Transverse colon (tissue), 4 donors: ENCODE measurements at regions of chr5 and their contacts with region 1.

Region 1: DNA sequence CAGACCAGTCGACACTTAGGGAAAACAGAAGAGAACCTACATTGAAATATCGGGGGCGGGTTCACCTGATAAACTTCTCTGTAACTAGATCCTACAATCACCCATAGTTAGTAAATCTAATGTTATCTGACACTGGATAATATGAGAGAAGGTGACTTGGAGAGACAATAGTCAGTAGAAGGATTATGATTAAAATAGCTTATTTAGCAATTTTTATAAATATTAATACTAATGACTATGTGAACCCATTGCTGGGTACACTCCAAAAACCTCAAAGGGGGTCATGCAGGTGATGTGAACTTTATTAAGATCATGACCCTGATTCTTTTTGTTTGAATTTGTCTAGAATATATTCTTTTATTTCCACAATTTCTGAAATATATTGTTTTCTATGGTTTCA is 164.1 kb upstream of the CCNH start:
- DNase-seq: no peak
- H3K4me3 ChIP-seq: no peak overlapping the region
- H3K27ac ChIP-seq: no peak overlapping the region
- H3K4me1 ChIP-seq: no peaks in the 10 kb centered on the region
- H3K27me3 ChIP-seq: no peaks in the 10 kb centered on the region
- CTCF ChIP-seq: no peak
- EP300 ChIP-seq: no peak
- POLR2A ChIP-seq: no peak

Region 2: GRCh38 chr5:87421307-87421706 is 155.6 kb before region 1 on chr5:
- in situ Hi-C with region 1: no loop called
- intact Hi-C with region 1: no loop called
- DNase-seq: no peak
- H3K4me3 ChIP-seq: no peak overlapping the region
- H3K27ac ChIP-seq: no peak overlapping the region
- H3K4me1 ChIP-seq: no peaks in the 10 kb centered on the region
- H3K27me3 ChIP-seq: no peaks in the 10 kb centered on the region
- CTCF ChIP-seq: no peak
- EP300 ChIP-seq: no peak
- POLR2A ChIP-seq: no peak

Region 3: DNA sequence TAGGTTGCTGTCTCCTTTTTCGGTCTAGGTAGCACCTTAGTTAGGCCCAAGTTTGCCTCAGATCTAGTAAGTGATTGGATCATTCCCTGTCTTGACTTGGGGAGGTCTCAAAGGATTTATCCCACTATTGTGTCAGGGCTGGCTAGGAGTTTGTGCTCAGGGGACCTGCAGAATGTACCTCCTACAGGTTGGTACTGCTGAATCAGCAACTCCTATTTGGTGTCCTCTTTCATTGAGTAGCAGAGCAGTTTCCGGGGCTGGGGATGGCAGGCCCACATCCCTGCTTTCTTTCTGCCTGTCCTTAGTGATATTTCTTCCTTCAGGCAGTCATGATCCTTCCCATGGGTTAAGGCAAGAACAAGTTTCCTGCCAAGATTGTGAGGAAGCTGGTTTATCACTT is 28.8 kb after region 1 on chr5:
- in situ Hi-C with region 1: no loop called
- intact Hi-C with region 1: loop called (anchors 1 kb)
- DNase-seq: no peak
- H3K4me3 ChIP-seq: no peak overlapping the region
- H3K27ac ChIP-seq: no peak overlapping the region
- H3K4me1 ChIP-seq: no peaks in the 10 kb centered on the region
- H3K27me3 ChIP-seq: no peaks in the 10 kb centered on the region
- CTCF ChIP-seq: no peak
- EP300 ChIP-seq: no peak
- POLR2A ChIP-seq: no peak

Region 4: GRCh38 chr5:88109818-88110217 is 533.0 kb after region 1 on chr5:
- in situ Hi-C with region 1: no loop called
- intact Hi-C with region 1: no loop called
- DNase-seq: no peak
- H3K4me3 ChIP-seq: no peak overlapping the region
- H3K27ac ChIP-seq: no peak overlapping the region
- H3K4me1 ChIP-seq: no peaks in the 10 kb centered on the region
- H3K27me3 ChIP-seq: no peaks in the 10 kb centered on the region
- CTCF ChIP-seq: no peak
- EP300 ChIP-seq: no peak
- POLR2A ChIP-seq: no peak